ENCODE measurements at regions of chr5 and their contacts with region 1.

Region 1: DNA sequence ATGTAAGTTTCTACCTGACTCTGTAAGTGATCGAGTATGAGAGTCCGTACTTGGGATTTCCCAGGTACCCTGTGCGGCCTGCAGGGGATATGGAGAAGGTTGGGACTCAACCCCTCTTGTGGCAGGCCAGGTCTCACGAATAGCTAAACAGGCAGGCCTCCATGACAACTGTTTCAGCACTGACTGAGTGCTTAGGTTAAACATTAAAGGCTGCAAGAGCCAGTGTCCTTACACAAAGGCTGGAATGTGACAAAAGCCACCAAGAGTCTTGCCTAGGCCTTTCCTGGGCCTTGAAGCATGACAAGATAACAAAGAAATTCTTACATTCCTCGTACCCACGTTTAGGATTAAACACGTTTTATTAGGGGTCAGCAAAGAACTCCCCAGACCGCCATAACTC is 58.6 kb downstream of the THBS4 start:
- DNase-seq: no peak
- H3K4me3 Mint-ChIP-seq: no peak overlapping the region
- H3K27ac Mint-ChIP-seq: no peak overlapping the region
- H3K4me1 Mint-ChIP-seq: peaks cover 22% of the 10 kb centered on the region
- H3K27me3 Mint-ChIP-seq: no peaks in the 10 kb centered on the region

Region 2: DNA sequence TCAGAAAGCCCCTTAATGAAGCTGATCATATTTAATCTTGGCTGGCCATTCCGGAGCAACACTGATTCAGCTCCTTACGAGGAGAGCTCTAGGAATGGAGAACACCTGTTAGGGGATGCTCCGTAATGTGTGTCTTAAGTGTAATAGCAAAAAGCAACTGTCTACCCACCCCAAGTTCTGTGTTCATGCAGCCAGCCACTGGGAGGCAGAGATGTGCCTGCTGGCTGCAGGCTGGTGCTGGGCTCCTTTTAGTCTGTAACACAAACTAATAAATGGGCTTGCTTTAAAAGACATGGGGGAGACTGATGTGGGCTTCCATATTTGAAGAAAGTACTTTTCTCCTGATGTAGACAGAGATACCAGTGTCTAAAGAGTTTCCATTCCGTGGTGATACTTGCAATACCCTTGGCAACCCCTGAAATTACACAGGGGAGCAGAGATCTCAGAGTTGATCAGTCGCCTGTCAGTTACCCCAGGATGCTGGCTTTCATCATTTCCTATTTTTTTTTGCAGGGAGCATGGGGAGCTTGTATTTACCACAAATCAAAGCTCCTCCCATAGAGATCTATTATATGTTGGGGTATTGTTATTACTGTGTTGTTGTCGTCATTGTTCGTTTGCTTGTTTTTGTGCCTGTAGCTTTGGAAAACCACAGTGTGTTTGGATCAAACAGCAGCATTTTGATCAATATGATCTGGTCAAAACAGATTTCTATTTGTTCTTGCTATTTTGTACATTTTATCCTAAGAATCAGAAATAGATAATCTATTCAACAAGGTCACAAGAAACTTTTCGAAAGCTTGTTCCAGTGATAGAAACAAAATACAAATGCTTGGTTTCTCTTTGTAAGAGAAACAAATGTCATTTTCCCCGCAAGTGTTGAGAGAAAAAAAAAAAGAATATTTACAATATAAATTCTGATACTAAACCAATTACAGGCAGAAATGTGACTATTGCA is 168.6 kb before region 1 on chr5:
- CTCF ChIA-PET with region 1: no interaction called
- POLR2A ChIA-PET with region 1: no interaction called
- intact Hi-C with region 1: no loop called
- DNase-seq: peak; percentile 34
- H3K4me3 Mint-ChIP-seq: no peak overlapping the region
- H3K27ac Mint-ChIP-seq: no peak overlapping the region
- H3K4me1 Mint-ChIP-seq: no peaks in the 10 kb centered on the region
- H3K27me3 Mint-ChIP-seq: peaks cover 4% of the 10 kb centered on the region

Region 3: GRCh38 chr5:80083101-80083890 is 10.5 kb before region 1 on chr5:
- CTCF ChIA-PET with region 1: interaction called, 36 read pairs
- POLR2A ChIA-PET with region 1: no interaction called
- intact Hi-C with region 1: no loop called
- DNase-seq: peak; percentile 31
- H3K4me3 Mint-ChIP-seq: peak overlapping the region; percentile 54
- H3K27ac Mint-ChIP-seq: peak overlapping the region; percentile 50
- H3K4me1 Mint-ChIP-seq: peaks cover 11% of the 10 kb centered on the region
- H3K27me3 Mint-ChIP-seq: no peaks in the 10 kb centered on the region

Region 4: DNA sequence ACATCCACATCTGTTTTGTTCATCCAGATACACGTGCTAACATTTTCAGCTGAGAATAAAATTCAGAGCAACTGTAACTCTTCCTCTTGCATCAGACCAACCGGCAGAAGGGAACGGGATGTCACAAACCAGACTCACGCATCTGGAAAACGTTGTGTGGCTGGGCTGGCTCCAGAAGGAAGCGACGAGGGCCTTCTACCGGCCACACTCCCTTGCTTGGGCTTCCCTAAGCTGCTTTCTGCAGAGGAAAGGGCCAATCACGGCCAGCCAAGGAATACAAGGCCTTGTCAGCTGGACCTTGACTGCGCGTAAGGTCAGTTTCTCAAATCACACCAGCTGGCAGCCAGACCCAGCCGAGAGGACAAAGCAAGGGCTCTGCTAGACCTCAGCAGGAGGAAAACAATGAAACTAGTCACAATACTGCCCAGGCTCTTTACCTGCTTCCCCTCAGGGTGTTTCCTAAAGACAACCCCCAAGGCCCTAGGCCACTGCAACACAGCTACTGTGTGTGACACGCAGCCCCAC is 47.4 kb after region 1 on chr5:
- CTCF ChIA-PET with region 1: interaction called, 10 read pairs
- POLR2A ChIA-PET with region 1: interaction called, 3 read pairs
- intact Hi-C with region 1: loop called (anchors 1 kb)
- DNase-seq: no peak
- H3K4me3 Mint-ChIP-seq: peak overlapping the region; percentile 40
- H3K27ac Mint-ChIP-seq: peak overlapping the region; percentile 87
- H3K4me1 Mint-ChIP-seq: peaks cover 77% of the 10 kb centered on the region
- H3K27me3 Mint-ChIP-seq: no peaks in the 10 kb centered on the region

Region 5: DNA sequence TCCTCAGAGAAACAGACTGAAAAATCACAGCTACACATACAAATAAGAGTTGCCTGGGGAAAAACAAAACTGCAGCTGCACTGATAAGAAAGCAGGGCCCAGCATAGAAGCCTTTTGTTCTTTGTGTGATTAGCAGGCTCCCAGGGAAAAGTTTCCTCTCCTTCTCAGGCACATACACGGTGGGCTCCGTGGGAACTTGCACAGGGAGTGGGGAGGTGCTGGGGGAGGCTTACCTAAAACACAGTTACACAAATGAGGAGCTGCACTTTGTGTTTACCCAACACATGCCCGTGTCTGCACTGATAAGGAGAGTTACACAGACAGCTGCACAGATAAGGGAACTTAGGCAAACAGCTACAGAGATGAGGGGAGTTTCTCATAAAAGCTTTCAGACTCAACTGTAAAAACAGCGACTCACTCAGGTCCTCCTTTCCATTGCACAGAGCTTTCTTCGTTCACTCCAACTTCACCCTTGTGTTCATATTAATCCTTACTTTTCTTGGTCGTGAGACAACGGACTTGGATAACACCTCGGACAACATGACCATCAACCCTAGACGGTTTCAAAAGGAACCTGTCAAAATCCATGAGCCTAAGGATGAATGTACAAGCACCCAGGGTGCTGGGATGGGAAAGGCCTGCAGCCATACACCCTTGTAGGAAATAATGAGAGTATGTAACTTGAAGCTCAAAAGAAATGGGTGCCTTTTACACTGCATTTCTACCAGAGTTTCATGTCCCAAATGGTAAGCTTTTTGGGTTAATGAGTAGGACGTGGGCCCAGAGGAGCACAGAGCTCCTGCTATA is 111.2 kb after region 1 on chr5:
- CTCF ChIA-PET with region 1: interaction called, 24 read pairs
- POLR2A ChIA-PET with region 1: no interaction called
- intact Hi-C with region 1: loop called (anchors 5 kb)
- DNase-seq: peak; percentile 33
- H3K4me3 Mint-ChIP-seq: peak overlapping the region; percentile 24
- H3K27ac Mint-ChIP-seq: peak overlapping the region; percentile 88
- H3K4me1 Mint-ChIP-seq: peaks cover 83% of the 10 kb centered on the region
- H3K27me3 Mint-ChIP-seq: no peaks in the 10 kb centered on the region

Region 6: DNA sequence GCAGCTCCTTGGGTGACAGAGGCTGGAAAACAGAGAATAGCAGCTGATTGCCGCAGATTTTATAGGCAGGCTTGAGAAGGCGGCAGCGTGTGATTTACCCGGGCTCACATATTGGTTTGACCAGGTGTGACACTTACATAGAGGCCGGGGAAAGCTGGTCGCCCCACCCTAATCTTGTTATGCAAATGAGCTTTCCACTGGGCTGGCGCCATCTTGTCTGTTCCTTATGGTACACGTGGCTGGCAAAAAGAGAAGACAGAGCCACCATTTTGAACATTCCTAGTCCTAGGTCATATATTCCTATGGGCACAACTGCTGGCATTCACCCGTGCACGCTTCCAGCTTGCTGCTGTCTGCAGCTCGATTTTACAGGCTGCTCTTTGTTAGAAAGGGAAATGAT is 214.7 kb after region 1 on chr5:
- CTCF ChIA-PET with region 1: interaction called, 214 read pairs
- POLR2A ChIA-PET with region 1: interaction called, 5 read pairs
- intact Hi-C with region 1: loop called (anchors 1 kb)
- DNase-seq: no peak
- H3K4me3 Mint-ChIP-seq: no peak overlapping the region
- H3K27ac Mint-ChIP-seq: no peak overlapping the region
- H3K4me1 Mint-ChIP-seq: no peaks in the 10 kb centered on the region
- H3K27me3 Mint-ChIP-seq: no peaks in the 10 kb centered on the region

Region 7: DNA sequence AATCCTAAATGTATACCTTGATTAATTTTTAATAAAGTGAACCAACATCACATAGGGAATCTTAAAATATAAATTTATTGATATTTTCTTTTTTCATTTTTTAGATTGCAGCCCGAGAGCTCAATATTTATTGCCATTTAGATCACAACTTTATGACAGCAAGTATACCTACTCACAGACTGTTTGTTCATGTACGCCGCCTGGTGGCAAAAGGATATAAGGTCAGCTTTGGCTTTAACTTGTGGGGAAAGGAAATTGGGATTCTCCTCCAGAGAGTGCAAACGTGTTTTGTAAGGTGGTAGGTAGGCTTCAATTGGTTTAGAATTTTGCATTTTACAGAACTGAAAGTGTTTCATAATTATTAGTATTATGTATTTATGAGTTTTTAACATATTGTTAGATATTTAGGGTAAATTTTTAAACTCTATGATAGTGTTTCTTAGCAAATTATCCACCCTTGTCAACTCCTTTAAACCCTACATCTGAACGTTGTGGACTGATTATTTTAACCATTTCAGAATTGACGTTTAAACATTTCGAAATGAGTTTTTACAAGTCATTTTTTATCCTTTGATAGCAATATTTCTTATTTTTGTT is 578.4 kb after region 1 on chr5:
- CTCF ChIA-PET with region 1: interaction called, 11 read pairs
- POLR2A ChIA-PET with region 1: no interaction called
- intact Hi-C with region 1: loop called (anchors 10 kb)
- DNase-seq: peak; percentile 78
- H3K4me3 Mint-ChIP-seq: no peak overlapping the region
- H3K27ac Mint-ChIP-seq: no peak overlapping the region
- H3K4me1 Mint-ChIP-seq: no peaks in the 10 kb centered on the region
- H3K27me3 Mint-ChIP-seq: no peaks in the 10 kb centered on the region

Measured in activated CD4-positive, alpha-beta memory T cell treated with anti-CD3 and anti-CD28 coated beads for 36 hours (primary cell).